ENCODE measurements at regions of chr20 and their contacts with region 1.

Region 1: GRCh38 chr20:19661717-19662636 is 96.1 kb upstream of the RIN2 start:
- DNase-seq: peak; percentile 60
- ATAC-seq: no peak
- H3K4me3 Mint-ChIP-seq: no peak overlapping the region
- H3K27ac Mint-ChIP-seq: no peak overlapping the region
- H3K4me1 Mint-ChIP-seq: no peaks in the 10 kb centered on the region
- H3K27me3 Mint-ChIP-seq: peaks cover 12% of the 10 kb centered on the region

Region 2: GRCh38 chr20:19205977-19206396 is 456.0 kb before region 1 on chr20:
- CTCF ChIA-PET with region 1: interaction called, 19 read pairs
- DNase-seq: peak; percentile 71
- ATAC-seq: peak; percentile 47
- H3K4me3 Mint-ChIP-seq: no peak overlapping the region
- H3K27ac Mint-ChIP-seq: no peak overlapping the region
- H3K4me1 Mint-ChIP-seq: no peaks in the 10 kb centered on the region
- H3K27me3 Mint-ChIP-seq: peaks cover 14% of the 10 kb centered on the region

Region 3: GRCh38 chr20:19628570-19629169 is 33.3 kb before region 1 on chr20:
- CTCF ChIA-PET with region 1: interaction called, 21 read pairs
- DNase-seq: peak; percentile 58
- ATAC-seq: no peak
- H3K4me3 Mint-ChIP-seq: no peak overlapping the region
- H3K27ac Mint-ChIP-seq: no peak overlapping the region
- H3K4me1 Mint-ChIP-seq: no peaks in the 10 kb centered on the region
- H3K27me3 Mint-ChIP-seq: no peaks in the 10 kb centered on the region